ENCODE measurements at regions of chr16 and their contacts with region 1.

Region 1: GRCh38 chr16:68040507-68041288 is 17.6 kb downstream of the DUS2 start:
- DNase-seq: peak; percentile 80 to 91
- ATAC-seq: peak; percentile 92 to 95 (median 94)
- H3K4me3 ChIP-seq: no peak overlapping the region
- H3K27ac ChIP-seq: no peak overlapping the region
- H3K4me1 ChIP-seq: peaks cover 4% of the 10 kb centered on the region
- H3K27me3 ChIP-seq: no peaks in the 10 kb centered on the region
- CTCF ChIP-seq: peak; percentile 80

Region 2: GRCh38 chr16:67697422-67698185 is 343.1 kb before region 1 on chr16:
- intact Hi-C with region 1: loop called in 1 of 2 experiments (anchors 10 kb)
- DNase-seq: no peak
- ATAC-seq: no peak
- H3K4me3 ChIP-seq: no peak overlapping the region
- H3K27ac ChIP-seq: no peak overlapping the region
- H3K4me1 ChIP-seq: peaks cover 6% of the 10 kb centered on the region
- H3K27me3 ChIP-seq: no peaks in the 10 kb centered on the region
- CTCF ChIP-seq: no peak

Region 3: GRCh38 chr16:67883872-67884261 is 156.8 kb before region 1 on chr16:
- intact Hi-C with region 1: loop called in 1 of 2 experiments (anchors 5 kb)
- DNase-seq: peak; percentile 64 to 80
- ATAC-seq: peak in 3 of 4 donors; percentile 21 to 48 (median 25)
- H3K4me3 ChIP-seq: no peak overlapping the region
- H3K27ac ChIP-seq: peak overlapping the region; percentile 93
- H3K4me1 ChIP-seq: peaks cover 61% of the 10 kb centered on the region
- H3K27me3 ChIP-seq: no peaks in the 10 kb centered on the region
- CTCF ChIP-seq: peak; percentile 81

Region 4: GRCh38 chr16:67987460-67988160 is 53.1 kb before region 1 on chr16:
- intact Hi-C with region 1: loop called (anchors 2 kb)
- DNase-seq: peak; percentile 59 to 84
- ATAC-seq: peak; percentile 81 to 87 (median 86)
- H3K4me3 ChIP-seq: peak overlapping the region; percentile 70
- H3K27ac ChIP-seq: peak overlapping the region; percentile 97
- H3K4me1 ChIP-seq: peaks cover 78% of the 10 kb centered on the region
- H3K27me3 ChIP-seq: no peaks in the 10 kb centered on the region
- CTCF ChIP-seq: no peak